ENCODE measurements at regions of chr5 and their contacts with region 1.

Region 1: GRCh38 chr5:149503006-149503405 is 48.2 kb downstream of the CSNK1A1 start:
- DNase-seq: no peak
- H3K4me3 Mint-ChIP-seq: no peak overlapping the region
- H3K27ac Mint-ChIP-seq: no peak overlapping the region
- H3K4me1 Mint-ChIP-seq: peaks cover 3% of the 10 kb centered on the region
- H3K27me3 Mint-ChIP-seq: no peaks in the 10 kb centered on the region

Region 2: GRCh38 chr5:149517461-149518122 is 14.6 kb after region 1 on chr5:
- intact Hi-C with region 1: loop called (anchors 2 kb)
- DNase-seq: no peak
- H3K4me3 Mint-ChIP-seq: no peak overlapping the region
- H3K27ac Mint-ChIP-seq: peak overlapping the region; percentile 2
- H3K4me1 Mint-ChIP-seq: peaks cover 66% of the 10 kb centered on the region
- H3K27me3 Mint-ChIP-seq: no peaks in the 10 kb centered on the region

Measured in activated T-helper 1 cell treated with anti-CD3 and anti-CD28 coated beads, Interleukin-12 subunit alpha, Interleukin-12 subunit beta, Interleukin-2, Interleukin-4 antibody, amounts not matched to agents 30 ng/mL and 10 ng/mL and 1 ng/mL, durations not matched to agents 14 hours and 24 hours and 36 hours (primary cell).